ENCODE measurements at regions of chr1 and their contacts with region 1.

Region 1: DNA sequence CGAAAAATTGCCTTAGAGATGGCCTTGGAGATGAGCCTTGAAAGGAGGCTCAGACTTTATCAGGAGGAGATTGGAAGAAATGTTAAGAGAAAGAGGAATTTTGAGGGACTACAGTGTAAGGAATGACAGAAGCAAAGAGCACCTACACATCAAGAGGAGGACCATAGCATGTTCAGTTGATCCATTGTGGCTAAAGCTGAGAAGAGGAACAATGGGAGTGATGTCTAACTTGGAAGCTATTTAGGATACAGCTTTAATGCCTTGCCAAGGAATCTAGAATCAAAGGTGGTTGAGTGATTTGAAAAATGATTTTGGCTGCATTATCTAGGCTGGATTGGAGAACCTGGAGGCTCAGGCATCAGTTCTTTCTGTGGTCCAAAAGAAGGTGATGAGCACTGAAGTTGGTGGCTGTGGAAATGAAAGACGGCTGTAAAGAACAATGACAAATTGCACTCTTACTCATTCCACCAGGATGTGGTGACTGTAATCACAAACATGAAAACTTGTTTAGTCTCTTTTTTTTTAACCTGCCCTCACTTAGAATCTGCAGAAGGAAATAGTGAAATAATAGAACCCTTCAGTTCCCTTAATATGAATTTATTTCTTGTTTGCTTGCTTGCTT is 11.3 kb downstream of the FAM20B start:
- DNase-seq: no peak
- ATAC-seq: no peak
- H3K4me3 ChIP-seq: no peak overlapping the region
- H3K27ac ChIP-seq: no peak overlapping the region
- H3K4me1 ChIP-seq: peaks cover 30 to 63% of the 10 kb centered on the region in 2 experiments
- H3K27me3 ChIP-seq: no peaks in the 10 kb centered on the region
- CTCF ChIP-seq: no peak; a peak in 1 of 6 replicates
- EP300 ChIP-seq: no peak
- POLR2A ChIP-seq: no peak
- RAD21 ChIP-seq: no peak

Region 2: DNA sequence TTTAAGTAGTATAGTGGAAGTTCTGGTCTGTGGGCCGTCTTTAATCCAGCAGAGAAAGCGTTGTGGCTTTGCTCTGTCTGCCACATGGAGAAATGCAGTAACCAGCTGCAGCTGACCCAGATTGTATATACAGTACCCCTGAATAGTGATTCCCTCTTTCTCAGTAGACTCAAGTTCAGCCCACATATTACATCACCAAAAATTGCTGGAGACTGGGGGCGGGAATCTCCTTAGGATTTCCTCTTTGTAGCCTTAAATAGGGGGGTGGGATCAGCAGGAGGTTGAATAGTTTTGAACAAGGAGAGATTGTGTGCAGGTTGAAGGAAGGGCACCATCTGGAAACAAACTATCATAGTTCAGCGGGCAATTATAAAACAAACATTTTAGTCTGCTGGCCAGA is 166.0 kb before region 1 on chr1 and contains the start of gene ANGPTL1:
- CTCF ChIA-PET with region 1: no interaction called
- POLR2A ChIA-PET with region 1: no interaction called
- in situ Hi-C with region 1: no loop called
- intact Hi-C with region 1: no loop called
- DNase-seq: no peak
- ATAC-seq: no peak
- H3K4me3 ChIP-seq: no peak within 1 kb of the TSS
- H3K27ac ChIP-seq: no peak within 1 kb of the TSS
- H3K4me1 ChIP-seq: no peaks in the 10 kb centered on the region
- H3K27me3 ChIP-seq: peaks cover 4 to 9% of the 10 kb centered on the region in 2 experiments; a peak in 3 of 5 replicates
- CTCF ChIP-seq: no peak
- EP300 ChIP-seq: no peak
- POLR2A ChIP-seq: no peak
- RAD21 ChIP-seq: no peak
- polyA plus RNA-seq, gene ANGPTL1: 0.06 TPM in 1 of 2 experiments, not detected in the other

Region 3: GRCh38 chr1:179025975-179026812 is 10.8 kb before region 1 on chr1:
- CTCF ChIA-PET with region 1: no interaction called
- POLR2A ChIA-PET with region 1: interaction called, 29 read pairs
- in situ Hi-C with region 1: no loop called
- intact Hi-C with region 1: no loop called
- DNase-seq: peak; percentile 85 to 96 (median 94)
- ATAC-seq: peak; percentile 81
- H3K4me3 ChIP-seq: peak overlapping the region; percentile 72
- H3K27ac ChIP-seq: peak overlapping the region; percentile 95
- H3K4me1 ChIP-seq: peaks cover 28 to 61% of the 10 kb centered on the region in 2 experiments
- H3K27me3 ChIP-seq: no peaks in the 10 kb centered on the region
- CTCF ChIP-seq: no peak
- EP300 ChIP-seq: no peak
- POLR2A ChIP-seq: peak; percentile 75
- RAD21 ChIP-seq: no peak; a peak in 1 of 4 replicates

Measured in K562 (cell line).